Left lung (tissue), 14 donors: ENCODE measurements at regions of chr6 and their contacts with region 1.

Region 1: DNA sequence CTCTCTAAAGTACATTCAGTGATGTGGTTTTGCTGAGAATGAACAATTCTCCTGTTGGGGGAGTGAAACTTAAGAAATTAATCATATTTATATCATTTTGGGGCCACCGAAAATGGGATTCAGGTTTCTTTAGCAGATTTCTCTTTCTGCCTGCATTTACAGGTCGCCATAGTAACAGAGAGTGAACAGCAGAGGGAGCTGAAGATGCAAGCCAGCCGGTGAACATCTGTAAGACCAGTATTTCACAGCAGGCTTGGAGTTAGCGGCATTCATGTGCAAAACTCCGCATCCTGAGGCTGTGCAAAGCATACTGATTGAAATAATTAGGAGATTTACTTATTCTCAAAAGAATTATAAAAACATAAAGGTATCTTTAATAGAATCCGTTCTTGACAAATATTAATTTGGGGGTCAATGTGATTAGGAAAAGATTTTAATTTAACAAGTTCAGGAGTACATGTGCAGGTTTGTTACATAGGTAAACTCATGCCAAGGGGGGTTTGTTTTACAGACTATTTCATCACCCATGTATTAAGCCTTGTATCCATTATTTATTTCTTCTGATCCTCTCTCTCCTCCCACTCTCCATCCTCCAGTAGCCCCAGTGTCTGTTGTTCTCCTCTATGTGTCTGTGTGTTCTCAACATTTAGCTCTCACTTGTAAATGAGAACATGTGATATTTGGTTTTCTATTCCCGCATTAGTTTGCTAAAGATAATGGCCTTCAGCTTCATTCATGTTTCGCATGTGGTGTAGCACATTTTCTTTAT is 17.8 kb upstream of the HSF2 start:
- DNase-seq: peak in 2 of 4 donors; percentile 61 to 85
- ATAC-seq: peak; percentile 89
- H3K4me3 ChIP-seq: no peak overlapping the region
- H3K27ac ChIP-seq: no peak overlapping the region
- H3K4me1 ChIP-seq: no peaks in the 10 kb centered on the region
- H3K27me3 ChIP-seq: no peaks in the 10 kb centered on the region
- CTCF ChIP-seq: peak; percentile 59 to 63

Region 2: GRCh38 chr6:122530440-122531046 is 148.9 kb after region 1 on chr6:
- intact Hi-C with region 1: loop called in 1 of 2 experiments (anchors 5 kb)
- DNase-seq: peak in 2 of 4 donors; percentile 49 to 63
- ATAC-seq: peak; percentile 95
- H3K4me3 ChIP-seq: no peak overlapping the region
- H3K27ac ChIP-seq: no peak overlapping the region
- H3K4me1 ChIP-seq: no peaks in the 10 kb centered on the region
- H3K27me3 ChIP-seq: peaks cover 0 to 6% of the 10 kb centered on the region in 2 donors
- CTCF ChIP-seq: peak; percentile 80 to 82

Region 3: GRCh38 chr6:122913558-122913957 is 531.9 kb after region 1 on chr6:
- intact Hi-C with region 1: no loop called
- DNase-seq: no peak
- ATAC-seq: no peak
- H3K4me3 ChIP-seq: no peak overlapping the region
- H3K27ac ChIP-seq: no peak overlapping the region
- H3K4me1 ChIP-seq: no peaks in the 10 kb centered on the region
- H3K27me3 ChIP-seq: no peaks in the 10 kb centered on the region
- CTCF ChIP-seq: no peak